Mammary epithelial cell (primary cell): ENCODE measurements at regions of chr1 and their contacts with region 1.

Region 1: DNA sequence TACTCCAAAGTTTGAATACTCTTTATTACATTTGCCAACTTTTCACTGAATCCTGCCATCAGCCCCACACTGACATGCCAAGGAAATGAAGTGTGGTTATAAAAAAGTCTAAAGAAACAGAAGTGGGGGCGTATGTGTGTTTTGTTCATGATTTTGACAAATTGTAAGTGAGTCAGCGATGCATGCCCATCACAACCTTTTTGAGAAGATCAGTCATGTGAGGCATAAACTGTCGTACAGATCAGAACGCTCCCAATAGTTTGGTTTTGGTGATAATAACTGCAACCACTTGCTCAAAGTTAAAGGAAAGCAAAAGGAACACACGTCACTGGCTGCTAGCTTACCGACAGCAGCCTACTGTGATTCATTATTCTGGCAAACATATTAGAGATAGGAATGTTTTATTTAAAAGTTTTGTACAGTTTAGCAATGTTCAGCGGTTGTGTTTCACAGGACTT is 95.6 kb downstream of the RGS2 start:
- DNase-seq: peak; percentile 88
- H3K4me3 ChIP-seq: peak overlapping the region in 1 of 3 experiments; percentile 13
- H3K27ac ChIP-seq: peak overlapping the region; percentile 96
- H3K4me1 ChIP-seq: peaks cover 49% of the 10 kb centered on the region
- H3K27me3 ChIP-seq: no peaks in the 10 kb centered on the region
- CTCF ChIP-seq: no peak

Region 2: GRCh38 chr1:192739476-192740184 is 164.8 kb before region 1 on chr1:
- CTCF ChIA-PET with region 1: no interaction called
- dilution Hi-C with region 1: no loop called
- in situ Hi-C with region 1: no loop called
- intact Hi-C with region 1: no loop called
- DNase-seq: no peak
- H3K4me3 ChIP-seq: no peak overlapping the region
- H3K27ac ChIP-seq: no peak overlapping the region
- H3K4me1 ChIP-seq: no peaks in the 10 kb centered on the region
- H3K27me3 ChIP-seq: no peaks in the 10 kb centered on the region
- CTCF ChIP-seq: no peak

Region 3: DNA sequence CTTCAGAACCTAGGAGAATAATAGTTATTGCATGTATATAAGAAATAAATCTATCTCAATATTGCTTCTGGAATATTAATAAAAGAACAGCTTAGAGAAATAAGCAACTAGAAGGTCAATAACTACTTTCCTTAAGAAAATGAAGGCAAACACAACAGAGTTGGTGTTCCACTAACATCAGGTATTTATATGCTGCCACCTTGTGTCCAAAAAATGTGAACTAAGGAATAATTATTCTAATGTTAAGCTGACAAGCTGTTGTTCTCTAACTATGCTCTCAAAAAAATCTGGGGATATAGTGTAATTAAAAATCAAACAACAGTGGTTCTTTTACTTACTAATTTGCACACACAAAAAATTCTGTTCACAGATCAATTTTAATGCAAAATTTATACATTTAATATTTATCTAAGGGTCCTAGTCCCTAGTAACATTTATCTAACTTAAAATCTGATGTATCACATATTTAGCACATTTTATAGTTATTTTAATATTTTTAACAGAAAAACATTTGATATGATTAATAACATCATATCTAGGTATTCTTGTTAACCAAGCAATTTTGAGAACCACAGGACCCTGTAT is 115.1 kb after region 1 on chr1:
- CTCF ChIA-PET with region 1: no interaction called
- dilution Hi-C with region 1: no loop called
- in situ Hi-C with region 1: no loop called
- intact Hi-C with region 1: loop called (anchors 10 kb)
- DNase-seq: peak; percentile 39
- H3K4me3 ChIP-seq: no peak overlapping the region
- H3K27ac ChIP-seq: no peak overlapping the region
- H3K4me1 ChIP-seq: no peaks in the 10 kb centered on the region
- H3K27me3 ChIP-seq: no peaks in the 10 kb centered on the region
- CTCF ChIP-seq: peak; percentile 33 to 53